Motor neuron (in vitro differentiated cells): ENCODE measurements at regions of chr18 and their contacts with region 1.

Region 1: DNA sequence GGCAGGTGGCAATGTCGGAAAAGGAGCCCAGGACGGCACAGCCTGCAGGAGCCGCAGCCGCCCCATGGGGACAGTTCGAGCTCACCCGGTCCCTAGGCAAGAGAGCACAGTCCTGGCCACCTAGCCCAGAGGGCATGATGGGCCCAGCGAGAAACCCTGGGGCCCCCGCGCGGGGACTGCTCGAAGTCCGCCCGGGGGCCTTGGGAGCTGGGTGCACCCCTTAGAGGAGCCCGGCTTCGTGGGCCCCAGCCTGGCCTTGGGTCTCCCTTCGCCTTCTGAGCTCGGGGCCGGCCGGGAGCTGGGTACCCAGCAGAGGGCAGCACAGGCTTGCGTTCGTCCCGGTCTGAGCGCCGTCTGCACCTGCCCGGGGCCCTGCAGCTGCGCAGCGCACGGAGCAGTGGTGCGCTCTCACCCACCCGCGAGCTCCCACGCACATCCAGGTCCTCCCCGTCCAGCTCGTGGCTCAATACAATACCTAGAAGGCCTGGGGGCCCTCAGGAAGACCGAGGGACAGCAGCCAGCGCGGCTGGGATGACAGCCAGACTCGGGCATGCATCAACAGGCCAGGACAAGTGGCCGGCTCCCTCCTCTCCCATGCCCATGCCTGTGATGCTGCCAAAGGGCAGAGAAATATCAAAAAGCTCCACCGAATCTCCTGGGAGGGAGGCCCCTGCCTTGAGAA is 96.2 kb upstream of the ZNF532 start:
- ATAC-seq: peak; percentile 95 to 99 (median 97)
- H3K4me3 ChIP-seq: peak overlapping the region; percentile 2 to 30 (median 14)
- H3K27ac ChIP-seq: no peak overlapping the region
- H3K4me1 ChIP-seq: peaks cover 7 to 9% of the 10 kb centered on the region in 2 donors

Region 2: GRCh38 chr18:58402247-58402646 is 366.2 kb before region 1 on chr18:
- in situ Hi-C with region 1: loop called in 1 of 9 experiments (anchors 25 kb)
- ATAC-seq: peak in 6 of 8 experiments; percentile 13 to 70 (median 47)
- H3K4me3 ChIP-seq: no peak overlapping the region
- H3K27ac ChIP-seq: no peak overlapping the region
- H3K4me1 ChIP-seq: peaks cover 13 to 14% of the 10 kb centered on the region in 2 donors

Region 3: DNA sequence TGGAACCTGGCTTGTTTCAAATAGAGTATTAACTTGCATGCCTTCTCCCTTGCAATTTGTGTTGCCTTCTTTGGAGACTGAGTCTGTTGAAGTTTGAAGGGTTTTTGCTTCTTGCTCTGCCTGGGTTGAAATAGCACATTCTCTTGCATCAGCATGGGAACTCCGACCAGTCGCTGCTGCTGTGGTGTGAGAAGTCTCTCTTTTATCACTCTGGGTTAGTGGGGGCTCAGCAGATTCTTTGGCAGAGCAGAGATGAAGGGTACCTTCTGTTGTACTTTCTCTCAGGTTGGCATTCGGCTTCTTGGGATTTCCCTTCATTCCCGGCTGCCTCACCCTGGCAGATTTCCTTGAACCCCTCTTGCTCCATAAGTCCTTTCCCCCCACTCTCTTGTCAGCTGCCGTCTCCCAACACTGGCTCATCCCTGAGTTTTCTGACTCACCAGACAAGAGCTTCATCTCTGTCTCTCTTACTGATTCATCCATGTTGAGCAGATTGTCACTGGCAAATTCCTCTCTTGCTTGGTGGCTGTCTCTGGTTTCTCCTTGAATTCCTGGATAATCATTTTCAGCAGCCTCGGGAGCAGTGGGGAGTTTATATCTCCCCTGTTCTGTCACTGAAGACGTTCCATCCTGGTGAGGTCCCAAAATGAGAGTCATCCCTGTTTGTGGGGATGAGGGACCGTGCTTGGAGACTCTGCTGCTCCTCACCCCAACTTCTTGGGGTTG is 189.4 kb before region 1 on chr18:
- in situ Hi-C with region 1: no loop called
- ATAC-seq: peak in 7 of 8 experiments; percentile 14 to 78 (median 57)
- H3K4me3 ChIP-seq: peak overlapping the region in 2 of 5 donors; percentile 17 to 28
- H3K27ac ChIP-seq: no peak overlapping the region
- H3K4me1 ChIP-seq: peaks cover 9 to 36% of the 10 kb centered on the region in 2 donors

Region 4: DNA sequence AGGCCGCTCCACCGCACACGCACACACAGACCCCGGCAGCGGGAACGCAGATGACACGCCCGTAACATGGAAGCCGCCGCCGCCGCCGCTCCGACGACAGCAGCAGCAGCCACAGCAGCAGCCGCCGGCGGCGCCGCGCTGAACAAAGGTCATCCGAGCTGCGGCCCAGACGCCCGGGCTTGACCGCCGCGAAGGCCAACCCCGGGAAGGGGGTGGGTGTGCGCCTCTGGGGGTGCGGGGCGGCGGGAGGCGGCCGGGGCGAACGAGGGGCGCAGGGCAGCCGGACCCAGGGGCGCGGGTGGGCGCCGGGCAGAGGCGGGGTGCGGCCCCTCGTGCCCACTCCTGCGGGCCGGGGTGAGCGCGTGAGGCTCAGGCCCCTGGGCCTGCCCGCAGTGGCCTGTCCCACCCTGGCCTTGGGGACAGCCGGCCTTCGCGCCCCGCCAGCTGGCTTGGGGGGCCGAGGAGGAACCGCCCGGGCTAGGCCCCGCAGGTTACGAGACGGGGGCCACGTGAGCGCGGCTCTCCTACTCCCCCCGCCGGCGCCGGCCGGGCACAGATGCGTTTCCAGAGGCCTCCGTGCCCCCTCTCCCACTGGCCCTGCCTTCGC is 95.2 kb after region 1 on chr18:
- in situ Hi-C with region 1: no loop called
- ATAC-seq: peak; percentile 11 to 54 (median 30)
- H3K4me3 ChIP-seq: peak overlapping the region; percentile 36 to 47 (median 43)
- H3K27ac ChIP-seq: peak overlapping the region; percentile 100
- H3K4me1 ChIP-seq: peaks cover 63 to 67% of the 10 kb centered on the region in 2 donors

Region 5: GRCh38 chr18:58896268-58896667 is 127.8 kb after region 1 on chr18:
- in situ Hi-C with region 1: no loop called
- ATAC-seq: peak in 6 of 8 experiments; percentile 5 to 97 (median 22)
- H3K4me3 ChIP-seq: no peak overlapping the region
- H3K27ac ChIP-seq: no peak overlapping the region
- H3K4me1 ChIP-seq: peaks cover 14 to 33% of the 10 kb centered on the region in 2 donors